Left colon (tissue), 2 donors: ENCODE measurements at regions of chr1 and their contacts with region 1.

Region 1: DNA sequence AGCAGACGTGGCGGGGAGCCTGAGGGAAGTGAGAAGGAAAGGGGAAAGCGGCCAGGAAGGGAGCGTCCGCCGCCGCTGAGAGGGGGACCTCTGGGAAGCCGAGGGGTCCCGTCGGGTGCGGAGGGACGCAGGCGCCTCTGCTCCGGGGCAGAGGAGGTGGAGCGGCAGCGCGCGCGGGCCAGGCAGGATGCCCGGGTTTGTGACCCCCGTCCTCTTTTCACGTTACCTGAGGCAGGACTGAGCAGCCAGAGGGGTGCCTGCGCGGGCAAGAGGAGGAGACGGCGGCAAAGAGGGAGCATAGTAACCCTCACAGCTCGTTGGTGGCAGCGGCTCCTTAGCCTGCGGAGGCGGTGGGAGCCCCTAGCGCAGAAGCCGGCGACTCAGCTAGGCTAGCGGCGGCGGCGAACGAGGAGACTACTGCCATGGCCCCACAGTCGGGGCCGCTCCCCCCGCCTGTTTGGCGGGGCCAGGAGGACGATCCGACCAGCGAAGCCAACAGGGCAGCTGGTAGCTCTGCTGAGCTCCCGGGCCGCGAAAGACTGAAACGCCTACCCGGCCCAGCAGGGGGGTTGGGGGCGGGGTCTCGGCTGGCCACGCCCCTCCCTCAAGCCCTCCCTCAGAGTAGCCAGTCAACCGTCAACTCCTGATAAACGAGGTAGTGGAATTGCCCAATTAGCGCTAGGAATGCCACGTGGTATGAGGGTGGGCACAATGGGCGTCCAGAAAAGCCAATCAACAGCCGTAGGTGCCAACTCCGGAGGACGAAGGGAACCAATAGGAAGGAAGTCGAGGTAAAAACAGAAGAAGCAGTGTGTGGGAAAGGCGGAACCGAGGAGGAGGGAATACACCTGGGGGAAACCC is at the start of gene TESK2:
- DNase-seq: peak; percentile 96 to 99
- ATAC-seq: peak; percentile 90
- total RNA-seq, gene TESK2: 8.4 to 17.5 TPM

Region 2: DNA sequence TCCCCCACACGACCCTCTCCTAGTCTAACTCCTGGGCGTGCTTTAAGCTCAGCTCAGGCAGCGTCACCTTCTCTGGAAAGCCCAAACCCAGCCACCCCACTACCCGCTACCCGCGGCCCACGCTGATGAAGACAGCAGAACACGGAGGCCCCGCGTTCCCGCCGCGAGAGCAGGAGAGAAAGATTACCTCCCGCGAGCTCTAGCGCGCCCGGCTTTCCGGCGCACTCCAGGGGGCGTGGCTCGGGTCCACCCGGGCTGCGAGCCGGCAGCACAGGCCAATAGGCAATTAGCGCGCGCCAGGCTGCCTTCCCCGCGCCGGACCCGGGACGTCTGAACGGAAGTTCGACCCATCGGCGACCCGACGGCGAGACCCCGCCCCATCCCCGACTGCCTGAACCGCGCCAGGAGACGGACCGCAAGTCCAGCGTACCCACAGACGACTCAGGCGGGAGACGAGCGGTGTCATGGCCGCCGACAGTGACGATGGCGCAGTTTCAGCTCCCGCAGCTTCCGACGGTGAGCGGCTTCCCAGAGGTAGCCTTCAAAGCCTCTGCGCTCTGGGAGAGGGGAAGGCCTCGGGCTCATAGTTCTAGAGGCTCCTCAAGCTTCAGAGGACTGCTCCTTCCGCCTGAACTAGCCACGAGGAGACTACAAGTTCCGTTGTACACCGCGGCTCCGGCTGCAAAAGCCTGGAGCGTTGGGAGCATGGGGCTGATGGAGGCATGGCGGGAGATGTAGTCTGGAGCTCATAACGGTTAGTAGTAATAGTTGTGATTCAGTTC is 150.9 kb before region 1 on chr1 and contains the starts of genes MUTYH and TOE1:
- intact Hi-C with region 1: loop called in 1 of 2 experiments (anchors 10 kb)
- DNase-seq: peak; percentile 93 to 96
- ATAC-seq: peak; percentile 77
- total RNA-seq, gene MUTYH: 28.1 to 29.1 TPM
- total RNA-seq, gene TOE1: 9.5 to 12.6 TPM

Region 3: DNA sequence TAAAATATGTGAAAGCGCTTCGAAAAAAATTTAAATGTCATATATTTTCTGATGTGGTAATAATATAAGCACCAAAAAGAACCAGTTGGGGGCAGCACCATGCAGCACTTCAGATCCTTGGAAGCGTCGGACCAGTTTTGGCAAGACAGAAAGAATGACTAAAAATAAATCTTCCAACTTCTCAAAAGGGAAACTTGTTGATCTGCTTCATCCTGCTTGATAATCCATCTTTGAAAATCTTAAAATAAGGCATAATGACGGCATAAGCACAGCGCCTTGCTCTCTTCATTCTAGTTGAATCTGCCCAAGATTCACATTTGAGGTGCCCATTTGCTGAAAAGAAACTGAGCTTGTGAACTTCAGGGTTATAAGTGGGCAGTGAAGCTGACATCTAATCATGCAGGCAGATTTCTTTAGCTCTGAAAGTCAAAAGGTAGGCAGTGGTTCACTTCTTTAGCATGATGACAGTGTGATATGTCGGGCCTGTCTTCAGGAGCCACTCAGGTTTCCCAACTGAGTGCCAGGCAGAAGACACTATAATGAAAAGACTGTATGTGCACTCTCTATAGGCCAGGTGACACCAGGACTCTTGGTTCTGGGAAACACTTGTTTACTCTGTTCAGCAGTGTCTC is 130.9 kb before region 1 on chr1:
- intact Hi-C with region 1: loop called in 1 of 2 experiments (anchors 2 kb)
- DNase-seq: peak; percentile 48 to 76
- ATAC-seq: peak; percentile 64